Activated CD8-positive, alpha-beta T cell treated with anti-CD3 and anti-CD28 coated beads, Interleukin-2, amount 10 ng/mL, durations not matched to agents 7 days and 5 days (primary cell): ENCODE measurements at regions of chr18 and their contacts with region 1.

Region 1: GRCh38 chr18:12657684-12658425 is at the start of gene SPIRE1:
- DNase-seq: peak; percentile 36
- ATAC-seq: peak; percentile 73
- H3K4me3 Mint-ChIP-seq: peak within 1 kb of the TSS; percentile 67
- H3K27ac Mint-ChIP-seq: no peak within 1 kb of the TSS
- H3K4me1 Mint-ChIP-seq: peaks cover 16% of the 10 kb centered on the region
- H3K27me3 Mint-ChIP-seq: peaks cover 19% of the 10 kb centered on the region
- total RNA-seq, gene SPIRE1: 2.5 to 2.7 TPM

Region 2: DNA sequence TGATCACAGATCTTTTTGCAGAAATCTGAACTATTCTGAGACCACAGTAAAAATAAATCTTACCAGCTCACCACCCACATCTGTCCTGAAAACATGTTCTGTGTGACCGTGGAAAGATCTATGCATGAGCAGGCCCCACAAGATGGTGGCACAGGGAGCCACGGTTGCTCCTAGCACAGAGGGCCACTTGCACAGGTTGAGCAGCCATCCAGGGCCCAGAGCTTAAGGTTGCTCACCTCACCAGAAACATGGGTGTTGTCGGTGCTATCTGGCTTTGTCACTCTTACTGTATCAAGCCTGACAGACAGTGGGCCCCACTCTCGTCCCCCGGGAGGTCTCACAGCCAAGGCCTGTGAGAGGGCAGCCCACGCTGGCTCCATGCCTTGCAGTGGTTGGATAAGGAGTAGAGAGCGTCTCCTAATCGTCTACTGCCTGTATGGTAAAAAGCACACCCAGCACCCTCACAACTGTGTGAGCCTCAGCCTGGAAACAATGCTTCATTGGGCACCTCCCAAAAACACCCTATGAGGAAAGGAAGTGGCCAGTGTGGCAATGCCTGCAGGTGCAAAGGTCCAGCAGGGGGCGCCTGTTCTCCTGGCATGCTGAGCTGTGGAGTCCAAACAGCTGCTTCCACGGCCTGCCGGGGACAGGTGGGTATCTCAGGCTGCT is 330.2 kb before region 1 on chr18:
- CTCF ChIA-PET with region 1: interaction called, 14 read pairs
- POLR2A ChIA-PET with region 1: no interaction called
- DNase-seq: peak; percentile 83
- ATAC-seq: peak; percentile 88
- H3K4me3 Mint-ChIP-seq: no peak overlapping the region
- H3K27ac Mint-ChIP-seq: peak overlapping the region; percentile 55
- H3K4me1 Mint-ChIP-seq: peaks cover 17% of the 10 kb centered on the region
- H3K27me3 Mint-ChIP-seq: no peaks in the 10 kb centered on the region

Region 3: DNA sequence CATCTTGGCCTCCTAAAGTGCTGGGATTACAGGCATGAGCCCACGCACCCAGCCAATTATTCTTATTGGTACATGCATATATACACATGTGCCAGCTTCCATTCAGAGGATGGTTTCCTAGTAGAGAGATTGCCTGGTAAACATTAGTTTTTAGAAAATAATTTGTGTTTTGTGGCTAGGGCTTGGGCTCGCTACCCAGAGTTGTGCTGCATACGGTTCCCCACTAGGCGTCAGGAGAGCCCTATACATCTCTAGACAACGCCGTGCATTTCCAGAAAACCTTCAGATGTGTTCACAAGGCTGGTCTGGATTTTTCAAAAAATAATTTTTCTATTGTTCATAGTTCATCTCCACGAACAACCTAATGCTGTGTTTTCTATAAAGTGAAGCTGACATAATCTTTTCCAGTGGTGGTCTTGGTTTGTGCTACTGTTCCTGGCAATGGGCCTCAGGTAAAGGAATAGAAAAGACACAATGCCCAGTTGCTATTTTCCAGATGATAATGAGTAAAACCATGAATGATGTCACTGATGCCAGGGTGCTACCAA is 266.2 kb before region 1 on chr18:
- CTCF ChIA-PET with region 1: interaction called, 73 read pairs
- POLR2A ChIA-PET with region 1: no interaction called
- DNase-seq: peak; percentile 71
- ATAC-seq: peak; percentile 94
- H3K4me3 Mint-ChIP-seq: no peak overlapping the region
- H3K27ac Mint-ChIP-seq: no peak overlapping the region
- H3K4me1 Mint-ChIP-seq: no peaks in the 10 kb centered on the region
- H3K27me3 Mint-ChIP-seq: peaks cover 5% of the 10 kb centered on the region

Region 4: DNA sequence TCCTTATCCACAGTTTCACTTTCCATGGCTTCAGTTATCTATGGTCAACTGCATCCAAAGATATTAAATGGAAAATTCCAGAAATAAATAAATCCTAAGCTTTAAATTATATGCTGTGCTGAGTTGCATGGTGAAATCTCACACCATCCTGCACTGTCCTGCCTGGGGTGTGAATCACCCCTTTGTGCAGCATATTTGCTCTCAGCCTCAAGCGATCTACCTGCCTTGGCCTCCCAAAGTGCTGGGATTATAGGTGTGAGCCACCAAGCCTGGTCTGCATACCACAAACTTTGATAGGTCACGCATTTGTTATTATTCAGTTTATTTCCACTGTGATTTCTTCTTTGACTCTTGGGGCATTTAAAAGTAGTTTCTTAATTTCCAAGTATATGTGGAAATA is 117.1 kb before region 1 on chr18:
- CTCF ChIA-PET with region 1: interaction called, 10 read pairs
- POLR2A ChIA-PET with region 1: no interaction called
- DNase-seq: no peak
- ATAC-seq: no peak
- H3K4me3 Mint-ChIP-seq: no peak overlapping the region
- H3K27ac Mint-ChIP-seq: no peak overlapping the region
- H3K4me1 Mint-ChIP-seq: peaks cover 11% of the 10 kb centered on the region
- H3K27me3 Mint-ChIP-seq: peaks cover 7% of the 10 kb centered on the region

Region 5: GRCh38 chr18:13003466-13003896 is 345.6 kb after region 1 on chr18:
- CTCF ChIA-PET with region 1: no interaction called
- POLR2A ChIA-PET with region 1: no interaction called
- DNase-seq: peak; percentile 29
- ATAC-seq: peak; percentile 67
- H3K4me3 Mint-ChIP-seq: no peak overlapping the region
- H3K27ac Mint-ChIP-seq: no peak overlapping the region
- H3K4me1 Mint-ChIP-seq: peaks cover 21% of the 10 kb centered on the region
- H3K27me3 Mint-ChIP-seq: no peaks in the 10 kb centered on the region